Activated naive CD4-positive, alpha-beta T cell treated with anti-CD3 and anti-CD28 coated beads for 36 hours (primary cell): ENCODE measurements at regions of chr19 and their contacts with region 1.

Region 1: GRCh38 chr19:45692187-45693105 is at the start of gene QPCTL:
- DNase-seq: peak; percentile 98
- H3K4me3 Mint-ChIP-seq: peak within 1 kb of the TSS; percentile 97
- H3K27ac Mint-ChIP-seq: peak within 1 kb of the TSS; percentile 98
- H3K4me1 Mint-ChIP-seq: peaks cover 34% of the 10 kb centered on the region
- H3K27me3 Mint-ChIP-seq: no peaks in the 10 kb centered on the region
- total RNA-seq, gene QPCTL: 12.0 to 14.1 TPM

Region 2: GRCh38 chr19:45423589-45424190 is 268.8 kb before region 1 on chr19 and contains the start of gene ERCC1:
- CTCF ChIA-PET with region 1: no interaction called
- intact Hi-C with region 1: loop called (anchors 5 kb)
- DNase-seq: peak; percentile 90
- H3K4me3 Mint-ChIP-seq: peak within 1 kb of the TSS; percentile 94
- H3K27ac Mint-ChIP-seq: peak within 1 kb of the TSS; percentile 90
- H3K4me1 Mint-ChIP-seq: peaks cover 63% of the 10 kb centered on the region
- H3K27me3 Mint-ChIP-seq: peaks cover 3% of the 10 kb centered on the region
- total RNA-seq, gene ERCC1: 28.9 to 30.7 TPM

Region 3: DNA sequence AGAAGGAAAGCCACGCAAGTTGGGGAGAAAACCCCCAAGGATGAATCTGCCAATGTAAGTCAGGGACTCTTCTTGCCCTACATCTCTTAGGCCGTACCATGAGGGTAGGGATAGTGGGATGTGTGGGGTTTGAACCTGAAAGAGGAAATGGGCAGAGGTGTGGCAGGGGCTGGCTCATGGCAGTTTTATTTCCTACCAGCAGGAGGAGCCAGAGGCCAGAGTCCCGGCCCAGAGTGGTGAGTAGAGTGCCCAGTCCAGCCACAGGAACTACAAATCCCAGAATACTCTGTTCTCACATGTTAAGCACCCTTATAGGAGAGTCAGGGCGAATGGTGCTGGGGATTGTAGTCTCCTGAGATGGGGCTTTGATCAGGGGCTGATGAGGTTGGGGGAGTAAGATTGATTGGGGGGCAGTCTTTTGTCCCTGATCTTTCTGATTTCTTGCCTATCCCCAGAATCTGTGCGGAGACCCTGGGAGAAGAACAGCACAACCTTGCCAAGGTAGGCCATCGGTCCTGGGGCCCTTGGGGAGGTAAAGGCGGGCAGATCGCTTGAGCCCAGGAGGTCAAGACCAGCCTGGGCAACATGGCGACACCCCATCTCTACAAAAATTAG is 168.7 kb before region 1 on chr19:
- CTCF ChIA-PET with region 1: interaction called, 4 read pairs
- intact Hi-C with region 1: loop called (anchors 1 kb)
- DNase-seq: peak; percentile 82
- H3K4me3 Mint-ChIP-seq: no peak overlapping the region
- H3K27ac Mint-ChIP-seq: peak overlapping the region; percentile 55
- H3K4me1 Mint-ChIP-seq: peaks cover 18% of the 10 kb centered on the region
- H3K27me3 Mint-ChIP-seq: no peaks in the 10 kb centered on the region

Region 4: DNA sequence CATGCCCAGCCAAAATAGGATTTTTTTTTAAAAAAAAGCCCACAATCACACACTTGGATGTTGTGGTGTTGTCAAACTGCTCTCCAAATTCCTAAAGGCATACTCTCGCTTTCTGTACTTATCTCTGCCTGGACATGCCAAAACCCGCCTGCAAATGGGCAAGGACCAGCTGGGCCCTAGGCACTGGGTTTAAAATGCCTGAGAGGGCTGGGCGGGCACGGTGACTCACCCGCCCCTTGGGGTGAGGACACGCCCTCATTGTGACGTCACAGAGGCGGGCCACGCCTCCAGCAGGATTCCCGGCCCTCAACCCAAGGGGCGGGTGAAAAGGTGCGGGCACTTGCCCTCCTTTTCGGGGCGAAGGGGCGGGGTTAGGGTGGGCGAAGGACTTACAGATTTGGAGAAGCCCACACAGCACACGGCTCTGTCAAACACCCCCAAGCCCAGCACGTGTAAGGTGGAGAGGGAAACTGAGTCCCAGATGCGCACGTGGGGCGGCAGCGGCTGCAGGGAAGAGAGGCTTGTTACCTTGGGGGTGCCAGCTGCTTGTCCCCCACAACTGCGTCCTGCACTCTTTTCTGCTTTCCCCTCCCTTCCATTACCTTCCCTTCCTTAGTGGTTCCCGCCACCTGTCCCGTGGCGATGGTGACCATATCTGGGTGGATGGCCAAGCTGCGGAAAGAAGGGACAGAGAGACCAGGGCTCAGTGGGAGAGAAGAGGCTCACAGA is 59.8 kb before region 1 on chr19:
- CTCF ChIA-PET with region 1: no interaction called
- intact Hi-C with region 1: no loop called
- DNase-seq: peak; percentile 69
- H3K4me3 Mint-ChIP-seq: peak overlapping the region; percentile 21
- H3K27ac Mint-ChIP-seq: peak overlapping the region; percentile 87
- H3K4me1 Mint-ChIP-seq: peaks cover 20% of the 10 kb centered on the region
- H3K27me3 Mint-ChIP-seq: no peaks in the 10 kb centered on the region

Region 5: DNA sequence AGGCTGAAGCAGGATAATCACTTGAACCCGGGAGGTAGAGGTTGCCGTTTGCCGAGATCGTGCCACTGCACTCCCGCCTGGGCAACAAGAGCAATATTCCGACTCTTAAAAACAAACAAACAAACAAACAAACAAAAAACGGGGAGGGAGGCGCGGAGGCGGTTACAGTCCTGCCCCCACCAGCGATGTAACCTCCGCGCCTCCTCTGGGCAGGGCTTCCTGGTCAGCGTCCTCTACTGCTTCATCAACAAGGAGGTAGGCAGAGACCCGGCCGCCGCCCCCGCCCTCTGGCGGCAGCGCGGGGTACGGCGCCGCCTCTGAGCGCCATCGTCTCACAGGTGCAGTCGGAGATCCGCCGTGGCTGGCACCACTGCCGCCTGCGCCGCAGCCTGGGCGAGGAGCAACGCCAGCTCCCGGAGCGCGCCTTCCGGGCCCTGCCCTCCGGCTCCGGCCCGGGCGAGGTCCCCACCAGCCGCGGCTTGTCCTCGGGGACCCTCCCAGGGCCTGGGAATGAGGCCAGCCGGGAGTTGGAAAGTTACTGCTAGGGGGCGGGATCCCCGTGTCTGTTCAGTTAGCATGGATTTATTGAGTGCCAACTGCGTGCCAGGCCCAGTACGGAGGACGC is 10.9 kb before region 1 on chr19:
- CTCF ChIA-PET with region 1: interaction called, 73 read pairs
- intact Hi-C with region 1: loop called (anchors 1 kb)
- DNase-seq: peak; percentile 90
- H3K4me3 Mint-ChIP-seq: peak overlapping the region; percentile 71
- H3K27ac Mint-ChIP-seq: no peak overlapping the region
- H3K4me1 Mint-ChIP-seq: peaks cover 20% of the 10 kb centered on the region
- H3K27me3 Mint-ChIP-seq: no peaks in the 10 kb centered on the region

Region 6: DNA sequence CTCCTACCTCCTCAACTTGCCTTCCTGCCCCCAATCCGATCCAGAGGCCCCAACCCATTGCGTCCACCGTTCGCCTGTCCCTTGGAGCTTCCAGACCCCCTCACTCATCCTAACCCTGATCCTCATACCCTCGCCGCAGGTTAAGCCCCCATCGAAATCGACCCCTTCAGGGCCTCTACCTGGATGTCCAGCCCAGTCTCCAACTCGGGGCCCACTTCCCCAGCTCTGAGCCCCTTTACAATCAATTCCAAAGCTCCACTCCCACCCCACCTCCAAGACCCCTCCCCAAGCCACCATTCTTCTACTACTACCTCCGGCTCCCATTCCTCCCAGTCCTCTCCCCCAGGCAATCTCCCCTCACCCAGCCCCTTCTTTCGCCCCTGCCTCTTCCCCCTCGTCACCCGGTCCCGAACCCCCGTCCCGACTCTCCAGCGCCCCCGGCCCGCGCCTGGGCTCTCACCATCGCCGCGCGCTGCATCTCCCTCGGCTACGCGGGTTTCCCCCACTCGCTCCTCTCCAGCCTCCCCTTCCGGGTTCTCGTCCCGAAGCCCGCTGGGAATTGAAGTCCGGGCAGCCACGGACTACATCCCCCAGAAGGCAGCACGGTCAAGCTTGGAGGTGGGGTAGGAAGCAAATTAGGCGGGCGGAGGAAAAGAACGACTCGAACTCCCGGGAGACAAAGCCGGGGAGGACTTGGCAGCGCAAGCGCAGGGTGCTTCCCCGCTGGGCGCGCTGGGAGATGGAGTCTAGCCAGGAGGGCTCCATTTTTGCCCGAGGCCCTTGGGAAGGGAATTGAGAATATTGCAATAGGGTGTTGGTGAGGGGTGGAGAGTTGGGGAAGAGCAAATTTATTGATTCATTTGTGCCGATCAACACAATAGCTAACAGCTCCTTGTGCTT is 38.2 kb after region 1 on chr19 and contains the start of gene FBXO46:
- CTCF ChIA-PET with region 1: interaction called, 5 read pairs
- intact Hi-C with region 1: loop called (anchors 1 kb)
- DNase-seq: peak; percentile 99
- H3K4me3 Mint-ChIP-seq: peak within 1 kb of the TSS; percentile 95
- H3K27ac Mint-ChIP-seq: peak within 1 kb of the TSS; percentile 83
- H3K4me1 Mint-ChIP-seq: peaks cover 29% of the 10 kb centered on the region
- H3K27me3 Mint-ChIP-seq: no peaks in the 10 kb centered on the region
- total RNA-seq, gene FBXO46: 21.8 to 23.2 TPM

Region 7: DNA sequence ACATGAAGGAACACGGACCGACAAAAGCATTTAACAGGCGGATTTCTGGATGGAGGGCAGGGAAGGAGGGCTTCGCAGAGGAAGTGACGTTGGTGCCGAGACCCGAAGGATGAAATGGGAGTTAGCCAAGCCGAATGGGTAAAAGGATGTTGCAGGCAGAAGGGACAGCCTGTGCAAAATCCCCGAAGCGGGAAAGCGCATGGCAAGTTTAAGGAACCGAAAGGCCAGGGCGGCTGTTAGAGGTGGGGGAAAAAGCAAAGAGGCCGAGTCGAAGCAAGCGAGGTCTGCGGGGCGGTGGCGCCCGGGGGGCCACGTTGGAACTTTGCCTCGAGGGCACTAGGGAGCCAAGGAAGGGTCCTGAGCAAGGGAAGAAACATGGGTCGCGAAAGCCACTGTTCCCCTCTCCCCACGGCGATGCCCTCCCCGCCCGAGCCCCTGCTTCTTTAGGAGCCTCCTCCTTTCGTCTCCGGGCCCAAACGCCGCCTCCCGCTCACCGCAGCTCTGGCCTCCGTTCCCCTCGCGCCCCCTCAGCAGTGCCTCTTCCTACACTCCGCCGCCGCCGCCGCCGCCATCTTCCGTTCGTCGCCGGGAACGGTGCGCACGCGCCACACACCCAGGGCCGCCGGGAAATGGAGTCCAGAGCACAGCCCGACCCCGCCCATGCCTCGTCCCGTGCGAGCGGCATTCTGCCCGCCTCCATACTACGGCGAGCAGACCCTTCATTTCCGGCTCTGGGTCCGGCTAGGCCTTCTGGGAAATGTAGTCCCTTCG is 170.3 kb after region 1 on chr19 and contains the start of gene SYMPK:
- CTCF ChIA-PET with region 1: interaction called, 9 read pairs
- intact Hi-C with region 1: loop called (anchors 1 kb)
- DNase-seq: peak; percentile 99
- H3K4me3 Mint-ChIP-seq: peak within 1 kb of the TSS; percentile 88
- H3K27ac Mint-ChIP-seq: peak within 1 kb of the TSS; percentile 94
- H3K4me1 Mint-ChIP-seq: peaks cover 24% of the 10 kb centered on the region
- H3K27me3 Mint-ChIP-seq: peaks cover 23% of the 10 kb centered on the region
- total RNA-seq, gene SYMPK: 96.9 to 97.4 TPM